ENCODE measurements at regions of chr20 and their contacts with region 1.

Region 1: GRCh38 chr20:41317536-41318270 is at the start of gene ZHX3:
- DNase-seq: peak; percentile 98
- H3K4me3 ChIP-seq: peak within 1 kb of the TSS; percentile 31 to 69 (median 64)
- H3K27ac ChIP-seq: peak within 1 kb of the TSS; percentile 83 to 92 (median 88)
- H3K4me1 ChIP-seq: peaks cover 6 to 50% (median 31%) of the 10 kb centered on the region in 4 donors
- H3K27me3 ChIP-seq: no peaks in the 10 kb centered on the region
- CTCF ChIP-seq: no peak
- EP300 ChIP-seq: no peak
- POLR2A ChIP-seq: peak; percentile 72
- total RNA-seq, gene ZHX3: 22.7 to 34.8 (median 26.4) TPM

Region 2: DNA sequence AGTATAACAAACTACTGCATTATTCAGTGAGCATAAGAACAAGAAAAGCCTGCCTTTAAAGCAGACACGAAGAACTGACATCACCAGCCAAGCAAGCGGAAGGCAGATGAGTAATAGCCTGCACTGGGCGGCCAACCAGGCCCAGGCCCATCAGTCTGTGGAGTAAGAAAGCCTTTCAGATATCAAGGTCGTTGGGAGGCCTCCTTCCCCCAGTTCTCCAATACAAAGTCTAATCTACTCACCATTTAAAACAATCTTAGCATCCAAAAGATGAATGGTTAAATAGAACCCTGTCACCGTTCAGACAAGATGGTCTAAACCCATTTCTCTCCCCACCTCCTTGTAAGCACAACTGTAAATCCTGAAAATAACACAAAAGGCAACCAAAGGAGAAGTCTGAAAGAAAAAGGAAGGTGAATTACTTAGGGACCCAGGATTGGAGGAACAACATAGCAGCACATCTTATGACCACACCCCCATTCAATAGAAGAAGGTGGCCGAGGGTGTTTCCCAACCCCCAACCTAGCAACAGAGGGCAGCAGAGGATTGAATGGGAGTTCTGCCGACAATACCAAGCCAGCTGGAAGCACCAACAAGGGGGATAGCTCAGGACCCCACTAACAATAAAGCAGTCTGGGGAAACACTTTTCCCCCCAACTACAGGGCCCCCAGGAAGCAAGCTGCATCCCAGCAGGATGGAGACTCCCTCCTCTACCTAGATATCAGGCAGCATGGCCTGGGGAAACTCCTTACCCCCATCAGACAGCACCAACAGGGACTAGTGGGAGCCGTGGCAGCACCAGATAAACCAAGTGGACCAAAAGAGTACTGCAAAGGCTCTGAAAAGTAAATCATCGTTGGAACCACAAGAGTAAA is 68.1 kb before region 1 on chr20:
- in situ Hi-C with region 1: no loop called
- intact Hi-C with region 1: loop called (anchors 5 kb)
- DNase-seq: peak; percentile 45
- H3K4me3 ChIP-seq: no peak overlapping the region
- H3K27ac ChIP-seq: peak overlapping the region; percentile 82 to 93 (median 85)
- H3K4me1 ChIP-seq: peaks cover 42 to 67% (median 56%) of the 10 kb centered on the region in 4 donors
- H3K27me3 ChIP-seq: no peaks in the 10 kb centered on the region
- CTCF ChIP-seq: peak in 4 of 5 experiments; percentile 18 to 32 (median 25)
- EP300 ChIP-seq: no peak
- POLR2A ChIP-seq: no peak

Measured in transverse colon (tissue), 4 donors.